Activated naive CD4-positive, alpha-beta T cell treated with anti-CD3 and anti-CD28 coated beads for 36 hours (primary cell): ENCODE measurements at regions of chr17 and their contacts with region 1.

Region 1: GRCh38 chr17:75199886-75200618 is 5.4 kb upstream of the NUP85 start:
- DNase-seq: no peak
- H3K4me3 Mint-ChIP-seq: no peak overlapping the region
- H3K27ac Mint-ChIP-seq: no peak overlapping the region
- H3K4me1 Mint-ChIP-seq: peaks cover 8% of the 10 kb centered on the region
- H3K27me3 Mint-ChIP-seq: no peaks in the 10 kb centered on the region

Region 2: GRCh38 chr17:75059369-75060345 is 140.4 kb before region 1 on chr17:
- CTCF ChIA-PET with region 1: interaction called, 4 read pairs
- intact Hi-C with region 1: loop called (anchors 2 kb)
- DNase-seq: no peak
- H3K4me3 Mint-ChIP-seq: no peak overlapping the region
- H3K27ac Mint-ChIP-seq: no peak overlapping the region
- H3K4me1 Mint-ChIP-seq: peaks cover 19% of the 10 kb centered on the region
- H3K27me3 Mint-ChIP-seq: no peaks in the 10 kb centered on the region

Region 3: GRCh38 chr17:75131280-75132017 is 68.6 kb before region 1 on chr17 and contains the start of gene NT5C:
- CTCF ChIA-PET with region 1: interaction called, 19 read pairs
- intact Hi-C with region 1: loop called (anchors 5 kb)
- DNase-seq: peak; percentile 71
- H3K4me3 Mint-ChIP-seq: peak within 1 kb of the TSS; percentile 85
- H3K27ac Mint-ChIP-seq: peak within 1 kb of the TSS; percentile 86
- H3K4me1 Mint-ChIP-seq: peaks cover 16% of the 10 kb centered on the region
- H3K27me3 Mint-ChIP-seq: no peaks in the 10 kb centered on the region
- total RNA-seq, gene NT5C: 49.7 to 55.2 TPM

Region 4: GRCh38 chr17:75173526-75173925 is 26.5 kb before region 1 on chr17:
- CTCF ChIA-PET with region 1: interaction called, 58 read pairs
- intact Hi-C with region 1: no loop called
- DNase-seq: no peak
- H3K4me3 Mint-ChIP-seq: no peak overlapping the region
- H3K27ac Mint-ChIP-seq: peak overlapping the region; percentile 2
- H3K4me1 Mint-ChIP-seq: peaks cover 28% of the 10 kb centered on the region
- H3K27me3 Mint-ChIP-seq: no peaks in the 10 kb centered on the region